Activated CD4-positive, alpha-beta T cell treated with anti-CD3 and anti-CD28 coated beads for 36 hours (primary cell): ENCODE measurements at regions of chr3 and their contacts with region 1.

Region 1: DNA sequence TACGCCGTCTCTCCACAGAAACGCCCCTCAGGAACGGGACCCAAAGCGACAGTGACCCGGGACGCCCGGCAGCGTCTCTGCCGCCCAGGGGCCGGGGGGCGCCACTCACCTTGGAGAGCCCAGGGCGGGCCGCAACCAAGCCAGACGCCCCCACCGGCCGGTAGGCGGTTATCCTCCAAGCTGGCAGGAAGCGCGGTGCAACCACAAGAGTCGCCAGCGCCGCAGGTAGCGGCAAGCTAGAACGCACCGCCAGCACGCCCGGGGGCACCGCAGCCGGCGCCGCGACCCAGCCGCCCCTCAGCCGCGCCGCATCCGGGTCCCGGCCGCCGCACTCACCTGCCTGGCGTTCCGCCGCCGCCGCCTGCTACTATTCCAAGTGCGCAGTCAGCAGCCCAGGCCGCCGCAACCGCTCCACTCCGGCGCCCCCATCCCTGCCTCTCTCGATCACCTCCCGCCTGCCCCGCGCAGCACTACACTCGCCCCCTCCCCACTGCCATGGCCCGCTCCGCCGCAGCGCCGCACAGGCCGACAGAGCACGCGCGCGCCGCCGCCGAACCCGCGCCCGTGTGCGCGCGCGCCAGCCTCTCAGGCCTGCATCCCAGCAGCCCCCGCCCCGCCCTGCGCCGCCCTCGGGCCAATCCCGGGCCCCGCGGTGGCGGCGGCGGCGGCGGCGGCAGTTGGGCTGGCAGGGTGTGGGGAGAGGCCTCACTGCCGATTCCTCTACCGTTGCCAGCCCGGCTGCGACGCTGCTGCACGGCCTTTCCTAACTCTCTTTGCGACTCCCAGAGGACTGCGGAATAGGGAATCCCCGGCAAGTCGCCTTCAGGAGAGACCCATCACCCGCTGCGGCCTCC is at the start of gene PIK3CB:
- DNase-seq: peak; percentile 93
- ATAC-seq: peak; percentile 91
- H3K4me3 Mint-ChIP-seq: peak within 1 kb of the TSS; percentile 94
- H3K27ac Mint-ChIP-seq: peak within 1 kb of the TSS; percentile 100
- H3K4me1 Mint-ChIP-seq: peaks cover 32% of the 10 kb centered on the region
- H3K27me3 Mint-ChIP-seq: no peaks in the 10 kb centered on the region
- total RNA-seq, gene PIK3CB: 16.2 to 19.1 TPM

Region 2: GRCh38 chr3:138186803-138187295 is 647.7 kb before region 1 on chr3:
- CTCF ChIA-PET with region 1: no interaction called
- POLR2A ChIA-PET with region 1: no interaction called
- intact Hi-C with region 1: loop called in 1 of 2 experiments (anchors 1 kb)
- DNase-seq: peak; percentile 94
- ATAC-seq: peak; percentile 96
- H3K4me3 Mint-ChIP-seq: peak overlapping the region; percentile 81
- H3K27ac Mint-ChIP-seq: peak overlapping the region; percentile 93
- H3K4me1 Mint-ChIP-seq: peaks cover 28% of the 10 kb centered on the region
- H3K27me3 Mint-ChIP-seq: peaks cover 3% of the 10 kb centered on the region

Region 3: DNA sequence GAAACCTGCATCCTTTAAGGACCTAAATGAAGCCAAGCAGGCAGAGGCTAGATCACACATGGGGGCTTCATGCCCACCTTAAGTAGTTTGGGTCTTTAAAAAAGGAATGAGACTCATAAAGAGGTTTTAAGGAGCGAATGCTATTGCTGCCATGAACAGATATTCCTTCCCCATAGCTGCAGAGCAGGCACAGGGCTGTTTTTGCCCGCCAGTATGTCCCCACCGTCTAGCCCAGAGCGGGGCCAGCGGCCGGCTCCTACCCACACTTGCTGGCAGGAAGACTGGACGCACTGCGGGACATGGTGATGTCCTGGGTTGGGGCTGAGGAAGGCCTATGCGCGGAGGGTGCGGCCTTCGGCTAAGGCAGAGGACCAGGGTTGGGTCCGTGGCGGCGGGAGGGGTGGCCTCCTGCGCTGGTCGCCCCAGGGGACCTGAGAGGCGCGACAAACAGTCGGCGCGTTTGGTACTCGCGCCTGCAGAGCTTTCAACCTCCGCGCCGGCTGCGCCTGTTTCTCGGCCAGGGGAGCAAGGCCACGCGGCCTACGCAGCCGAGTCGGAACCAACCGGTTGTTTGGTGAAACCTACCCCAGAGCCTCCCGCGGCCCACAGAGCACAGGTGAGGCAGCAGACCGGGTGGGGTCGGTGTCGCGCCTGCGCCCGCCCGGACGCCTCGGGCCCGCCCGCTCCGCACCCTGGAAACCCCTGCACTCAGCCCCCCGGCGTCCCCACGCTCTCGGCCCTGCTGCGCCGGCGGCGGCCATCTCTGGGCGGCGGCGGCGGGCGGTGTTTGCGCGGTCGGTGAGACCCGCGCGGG is 226.1 kb before region 1 on chr3 and contains the start of gene FAIM:
- CTCF ChIA-PET with region 1: no interaction called
- POLR2A ChIA-PET with region 1: no interaction called
- intact Hi-C with region 1: loop called in 1 of 2 experiments (anchors 2 kb)
- DNase-seq: peak; percentile 79
- ATAC-seq: peak; percentile 74
- H3K4me3 Mint-ChIP-seq: peak within 1 kb of the TSS; percentile 77
- H3K27ac Mint-ChIP-seq: peak within 1 kb of the TSS; percentile 95
- H3K4me1 Mint-ChIP-seq: peaks cover 13% of the 10 kb centered on the region
- H3K27me3 Mint-ChIP-seq: no peaks in the 10 kb centered on the region
- total RNA-seq, gene FAIM: 2.6 to 4.0 TPM

Region 4: DNA sequence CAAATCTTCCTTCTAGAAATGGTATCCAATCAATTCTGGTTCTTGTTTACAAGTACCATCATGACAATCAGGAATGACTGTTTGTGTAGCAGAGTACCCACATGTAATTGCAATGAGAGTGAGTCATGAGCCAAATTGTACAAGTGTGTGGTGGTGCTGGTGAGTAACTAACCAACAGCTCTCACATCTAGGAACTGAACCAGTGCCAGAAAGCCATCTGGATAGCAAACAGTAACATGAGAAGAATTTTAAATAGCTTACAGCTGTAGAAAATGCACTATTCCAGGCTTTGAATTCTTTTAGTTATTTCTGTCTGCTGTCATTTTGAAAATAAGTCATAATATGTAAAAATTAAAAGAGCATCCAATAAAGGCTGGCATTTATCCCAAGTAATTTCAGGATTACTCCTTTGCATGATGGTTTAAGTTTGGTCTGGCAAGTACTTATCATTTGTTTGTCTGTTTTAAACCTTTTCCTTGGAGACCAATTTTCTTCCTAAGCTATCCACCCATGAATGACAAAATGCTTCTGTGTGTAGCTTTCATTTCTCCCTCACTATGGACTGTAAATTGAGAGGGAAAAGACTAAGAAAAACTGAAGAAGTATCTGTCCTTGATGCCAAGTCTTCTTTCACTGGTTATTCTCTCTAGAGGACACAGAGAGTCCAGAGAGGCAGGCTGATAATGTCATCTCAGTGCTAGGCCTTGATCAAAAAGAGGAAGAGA is 59.9 kb before region 1 on chr3:
- CTCF ChIA-PET with region 1: interaction called, 3 read pairs
- POLR2A ChIA-PET with region 1: no interaction called
- intact Hi-C with region 1: loop called (anchors 1 to 2 kb)
- DNase-seq: peak; percentile 55
- ATAC-seq: peak; percentile 99
- H3K4me3 Mint-ChIP-seq: no peak overlapping the region
- H3K27ac Mint-ChIP-seq: no peak overlapping the region
- H3K4me1 Mint-ChIP-seq: peaks cover 37% of the 10 kb centered on the region
- H3K27me3 Mint-ChIP-seq: no peaks in the 10 kb centered on the region

Region 5: GRCh38 chr3:139355476-139355875 is 520.9 kb after region 1 on chr3:
- CTCF ChIA-PET with region 1: no interaction called
- POLR2A ChIA-PET with region 1: interaction called, 3 read pairs
- intact Hi-C with region 1: loop called in 1 of 2 experiments (anchors 5 kb)
- DNase-seq: no peak
- ATAC-seq: no peak
- H3K4me3 Mint-ChIP-seq: no peak overlapping the region
- H3K27ac Mint-ChIP-seq: no peak overlapping the region
- H3K4me1 Mint-ChIP-seq: peaks cover 37% of the 10 kb centered on the region
- H3K27me3 Mint-ChIP-seq: no peaks in the 10 kb centered on the region